PC-3 (cell line): ENCODE measurements at regions of chr1 and their contacts with region 1.

Region 1: GRCh38 chr1:165073185-165074007 is 283.1 kb downstream of the LMX1A start:
- DNase-seq: peak; percentile 79
- ATAC-seq: peak; percentile 68
- H3K4me3 ChIP-seq: no peak overlapping the region
- H3K27ac ChIP-seq: no peak overlapping the region
- H3K4me1 ChIP-seq: no peaks in the 10 kb centered on the region
- H3K27me3 ChIP-seq: peaks cover 25% of the 10 kb centered on the region
- CTCF ChIP-seq: peak; percentile 77

Region 2: GRCh38 chr1:163410073-163410999 is 1663.1 kb before region 1 on chr1:
- CTCF ChIA-PET with region 1: no interaction called
- POLR2A ChIA-PET with region 1: no interaction called
- intact Hi-C with region 1: loop called (anchors 1 kb)
- DNase-seq: peak; percentile 85
- ATAC-seq: peak; percentile 52
- H3K4me3 ChIP-seq: no peak overlapping the region
- H3K27ac ChIP-seq: no peak overlapping the region
- H3K4me1 ChIP-seq: no peaks in the 10 kb centered on the region
- H3K27me3 ChIP-seq: peaks cover 40% of the 10 kb centered on the region
- CTCF ChIP-seq: peak; percentile 97

Region 3: GRCh38 chr1:163844459-163844858 is 1228.9 kb before region 1 on chr1:
- CTCF ChIA-PET with region 1: no interaction called
- POLR2A ChIA-PET with region 1: no interaction called
- intact Hi-C with region 1: no loop called
- DNase-seq: peak; percentile 8
- ATAC-seq: no peak
- H3K4me3 ChIP-seq: no peak overlapping the region
- H3K27ac ChIP-seq: no peak overlapping the region
- H3K4me1 ChIP-seq: no peaks in the 10 kb centered on the region
- H3K27me3 ChIP-seq: no peaks in the 10 kb centered on the region
- CTCF ChIP-seq: no peak

Region 4: DNA sequence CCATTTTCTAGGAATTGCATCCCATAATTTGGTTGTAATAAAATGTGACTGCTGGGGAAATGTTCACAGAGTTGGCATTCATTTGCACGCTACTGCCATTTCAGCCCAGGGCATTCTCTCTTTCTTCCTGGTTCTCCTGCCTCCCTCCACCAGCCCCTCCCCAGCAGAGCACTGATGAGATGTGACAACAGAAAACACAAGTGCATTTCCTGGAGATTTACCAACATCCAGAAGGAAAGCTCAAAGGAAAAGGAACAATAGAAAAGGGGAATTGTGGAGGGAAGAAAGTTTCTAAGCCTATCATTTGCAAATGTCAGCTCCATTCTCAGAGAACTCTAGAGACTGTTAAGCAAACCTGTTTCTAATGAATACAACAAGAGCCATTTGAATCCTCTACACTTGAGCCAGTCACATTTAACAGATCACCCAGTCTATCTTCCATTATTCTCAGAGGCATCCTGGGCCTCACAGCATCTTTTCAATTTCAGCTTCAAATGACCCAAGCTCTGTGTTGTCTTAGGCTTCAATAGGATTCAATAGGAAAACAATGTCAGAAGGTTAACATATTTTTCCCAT is 910.0 kb before region 1 on chr1:
- CTCF ChIA-PET with region 1: no interaction called
- POLR2A ChIA-PET with region 1: no interaction called
- intact Hi-C with region 1: loop called (anchors 10 kb)
- DNase-seq: no peak
- ATAC-seq: no peak
- H3K4me3 ChIP-seq: no peak overlapping the region
- H3K27ac ChIP-seq: no peak overlapping the region
- H3K4me1 ChIP-seq: no peaks in the 10 kb centered on the region
- H3K27me3 ChIP-seq: peaks cover 10% of the 10 kb centered on the region; the same call in 1 of the 2 replicates
- CTCF ChIP-seq: no peak

Region 5: DNA sequence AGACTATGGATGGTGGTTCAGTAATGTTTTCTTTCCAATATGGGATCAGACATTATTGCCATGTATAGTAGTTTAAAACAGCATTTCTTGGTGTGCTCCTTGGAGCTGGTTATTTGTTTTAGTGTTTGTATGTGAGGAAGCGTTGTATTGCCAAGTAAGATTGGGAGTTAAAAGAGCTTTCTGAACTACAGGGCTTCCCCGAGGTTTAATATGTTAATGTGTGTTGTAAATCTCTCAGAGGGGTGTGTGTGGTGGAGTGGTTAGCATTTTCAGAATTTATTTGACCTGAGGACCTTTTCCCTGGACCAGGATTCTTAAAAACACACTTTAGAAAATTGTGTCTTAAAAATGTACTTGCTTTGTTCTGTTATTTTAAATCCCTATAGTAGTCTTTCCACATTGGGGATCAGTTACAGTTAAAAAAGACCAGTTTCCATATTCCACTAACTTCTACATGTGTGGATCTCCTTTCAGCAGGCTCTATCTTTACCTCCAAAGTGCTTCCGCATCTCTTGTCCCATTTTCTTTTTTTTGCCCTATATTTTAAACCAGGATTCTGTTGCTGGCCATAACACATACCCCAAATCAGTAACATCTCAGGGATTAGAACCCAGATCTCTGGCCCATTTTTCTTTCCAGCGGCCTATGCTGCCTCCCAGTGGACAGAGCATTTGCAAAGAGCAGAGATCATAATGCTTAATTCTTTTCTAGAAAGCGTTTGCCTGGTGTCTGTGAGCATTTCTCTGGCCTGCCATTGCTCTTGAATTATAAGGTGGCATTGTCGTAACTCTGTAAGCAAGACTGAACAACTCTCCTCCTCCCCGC is 455.8 kb before region 1 on chr1:
- CTCF ChIA-PET with region 1: no interaction called
- POLR2A ChIA-PET with region 1: no interaction called
- intact Hi-C with region 1: loop called (anchors 10 kb)
- DNase-seq: peak; percentile 70
- ATAC-seq: peak; percentile 31
- H3K4me3 ChIP-seq: no peak overlapping the region
- H3K27ac ChIP-seq: no peak overlapping the region
- H3K4me1 ChIP-seq: peaks cover 12% of the 10 kb centered on the region
- H3K27me3 ChIP-seq: no peaks in the 10 kb centered on the region
- CTCF ChIP-seq: peak; percentile 94

Region 6: DNA sequence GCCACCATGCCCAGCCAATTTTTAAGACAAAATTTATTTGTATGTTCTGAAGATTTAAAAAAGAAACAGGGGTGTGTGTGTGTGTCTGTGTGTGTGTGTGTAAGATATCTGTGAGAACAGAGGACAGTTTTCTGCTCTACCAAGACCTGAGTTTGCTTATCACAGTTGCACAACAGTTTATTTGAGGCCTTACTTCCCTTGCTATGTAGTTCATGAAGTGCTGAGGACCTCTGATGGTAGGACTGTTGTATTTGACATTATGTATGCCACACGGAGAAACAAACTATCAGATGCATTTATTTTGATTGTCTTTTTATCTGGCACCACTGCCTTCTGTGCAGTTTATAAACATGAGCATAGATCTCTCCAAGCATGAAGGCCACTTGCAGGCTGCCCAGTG is 159.2 kb before region 1 on chr1:
- CTCF ChIA-PET with region 1: no interaction called
- POLR2A ChIA-PET with region 1: no interaction called
- intact Hi-C with region 1: loop called (anchors 5 kb)
- DNase-seq: peak; percentile 38
- ATAC-seq: peak; percentile 64
- H3K4me3 ChIP-seq: no peak overlapping the region
- H3K27ac ChIP-seq: no peak overlapping the region
- H3K4me1 ChIP-seq: no peaks in the 10 kb centered on the region
- H3K27me3 ChIP-seq: peaks cover 96% of the 10 kb centered on the region
- CTCF ChIP-seq: 0 out of 2 replicates have a peak, but pooled peaks have one; percentile 28

Region 7: DNA sequence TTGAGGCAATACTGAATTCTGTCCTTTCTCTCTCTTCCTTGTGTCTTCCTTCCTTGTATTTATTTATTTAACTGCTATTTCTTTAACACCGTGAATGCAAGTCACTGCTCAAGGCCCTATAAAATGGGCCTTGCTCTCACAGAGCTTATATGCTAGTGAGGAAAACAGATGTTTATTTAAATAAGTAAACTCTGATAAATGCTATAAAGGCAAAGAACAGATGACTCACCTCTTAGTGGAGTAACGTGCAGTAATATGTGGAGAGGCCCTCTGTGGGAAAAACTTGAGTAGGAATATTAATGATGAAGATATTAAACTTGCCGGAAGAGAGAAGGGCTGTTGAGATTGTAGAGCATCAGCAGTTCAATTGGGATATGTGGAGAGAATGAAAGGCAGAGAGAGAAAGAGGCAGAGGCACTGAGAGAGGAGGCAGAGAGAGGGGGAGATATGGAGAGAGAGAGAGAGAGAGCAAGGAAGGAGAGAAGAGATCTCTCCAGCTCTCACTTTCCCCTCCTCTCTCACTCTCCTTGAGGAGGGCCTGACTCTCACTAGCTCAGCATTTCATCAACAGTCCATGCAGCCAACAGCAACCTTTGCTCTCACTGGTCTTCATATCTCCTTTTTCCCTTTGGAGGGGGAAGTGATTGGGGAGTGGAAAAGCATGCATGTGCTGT is 39.1 kb before region 1 on chr1:
- CTCF ChIA-PET with region 1: no interaction called
- POLR2A ChIA-PET with region 1: no interaction called
- intact Hi-C with region 1: no loop called
- DNase-seq: peak; percentile 31
- ATAC-seq: peak; percentile 37; the same call in 1 of the 2 replicates
- H3K4me3 ChIP-seq: no peak overlapping the region
- H3K27ac ChIP-seq: no peak overlapping the region
- H3K4me1 ChIP-seq: no peaks in the 10 kb centered on the region
- H3K27me3 ChIP-seq: peaks cover 10% of the 10 kb centered on the region; the same call in 1 of the 2 replicates
- CTCF ChIP-seq: no peak

Region 8: DNA sequence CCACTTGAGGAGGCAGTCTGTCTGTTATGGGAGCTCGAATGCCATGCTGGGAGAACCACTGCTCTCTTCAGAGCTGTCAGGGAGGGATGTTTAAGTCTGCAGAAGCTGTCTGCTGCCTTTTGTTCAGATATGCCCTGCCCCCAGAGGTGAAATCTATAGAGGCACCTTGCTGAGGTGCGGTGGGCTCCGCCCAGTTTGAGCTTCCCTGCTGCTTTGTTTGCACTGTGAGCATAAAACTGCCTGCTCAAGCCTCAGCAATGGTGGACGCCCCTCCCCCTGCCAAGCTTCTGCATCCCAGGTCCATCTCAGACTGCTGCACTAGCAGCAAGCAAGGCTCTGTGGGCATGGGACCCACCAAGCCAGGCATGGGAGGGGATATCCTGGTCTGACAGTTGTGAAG is 35.6 kb after region 1 on chr1:
- CTCF ChIA-PET with region 1: no interaction called
- POLR2A ChIA-PET with region 1: no interaction called
- intact Hi-C with region 1: no loop called
- DNase-seq: peak; percentile 26
- ATAC-seq: no peak
- H3K4me3 ChIP-seq: no peak overlapping the region
- H3K27ac ChIP-seq: no peak overlapping the region
- H3K4me1 ChIP-seq: no peaks in the 10 kb centered on the region
- H3K27me3 ChIP-seq: peaks cover 18% of the 10 kb centered on the region
- CTCF ChIP-seq: no peak

Region 9: GRCh38 chr1:165793951-165794350 is 720.6 kb after region 1 on chr1:
- CTCF ChIA-PET with region 1: no interaction called
- POLR2A ChIA-PET with region 1: no interaction called
- intact Hi-C with region 1: no loop called
- DNase-seq: peak; percentile 28
- ATAC-seq: peak; percentile 15; the same call in 1 of the 2 replicates
- H3K4me3 ChIP-seq: no peak overlapping the region
- H3K27ac ChIP-seq: no peak overlapping the region
- H3K4me1 ChIP-seq: no peaks in the 10 kb centered on the region
- H3K27me3 ChIP-seq: no peaks in the 10 kb centered on the region
- CTCF ChIP-seq: no peak